RWPE1 (cell line): ENCODE measurements at regions of chr11 and their contacts with region 1.

Region 1: GRCh38 chr11:86346513-86346912 is 28.2 kb upstream of the CCDC81 start:
- DNase-seq: no peak
- H3K27ac ChIP-seq: no peak overlapping the region
- CTCF ChIP-seq: no peak

Region 2: GRCh38 chr11:86797133-86797532 is 450.6 kb after region 1 on chr11:
- CTCF ChIA-PET with region 1: interaction called, 10 read pairs
- POLR2A ChIA-PET with region 1: no interaction called
- DNase-seq: no peak
- H3K27ac ChIP-seq: no peak overlapping the region
- CTCF ChIP-seq: no peak